T-cell (primary cell): ENCODE measurements at regions of chr12 and their contacts with region 1.

Region 1: GRCh38 chr12:131104463-131105350 is 151.0 kb downstream of the ADGRD1 start:
- DNase-seq: peak; percentile 34 to 85 (median 73)
- ATAC-seq: peak; percentile 66 to 79 (median 72)
- H3K4me3 ChIP-seq: no peak overlapping the region
- H3K4me3 Mint-ChIP-seq: peak overlapping the region in 2 of 3 donors; percentile 34 to 79
- H3K27ac ChIP-seq: no peak overlapping the region
- H3K27ac Mint-ChIP-seq: no peak overlapping the region
- H3K4me1 ChIP-seq: peaks cover 6 to 24% of the 10 kb centered on the region in 2 experiments
- H3K4me1 Mint-ChIP-seq: peaks cover 19 to 23% (median 19%) of the 10 kb centered on the region in 3 donors
- H3K27me3 ChIP-seq: peaks cover 0 to 47% of the 10 kb centered on the region in 2 experiments
- H3K27me3 Mint-ChIP-seq: peaks cover 0 to 7% of the 10 kb centered on the region in 2 donors

Region 2: GRCh38 chr12:131132118-131132892 is 27.6 kb after region 1 on chr12:
- CTCF ChIA-PET with region 1: interaction called, 19 to 43 read pairs
- POLR2A ChIA-PET with region 1: no interaction called
- DNase-seq: peak; percentile 12 to 77 (median 64)
- ATAC-seq: peak; percentile 50 to 71 (median 64)
- H3K4me3 ChIP-seq: no peak overlapping the region
- H3K4me3 Mint-ChIP-seq: no peak overlapping the region
- H3K27ac ChIP-seq: no peak overlapping the region
- H3K27ac Mint-ChIP-seq: no peak overlapping the region
- H3K4me1 ChIP-seq: peaks cover 0 to 6% of the 10 kb centered on the region in 2 experiments
- H3K4me1 Mint-ChIP-seq: peaks cover 0 to 6% (median 2%) of the 10 kb centered on the region in 3 donors
- H3K27me3 ChIP-seq: peaks cover 0 to 7% of the 10 kb centered on the region in 2 experiments
- H3K27me3 Mint-ChIP-seq: no peaks in the 10 kb centered on the region